Activated B cell treated with CpG ODN at 0.5 μM for 24 hours (primary cell): ENCODE measurements at regions of chr7 and their contacts with region 1.

Region 1: DNA sequence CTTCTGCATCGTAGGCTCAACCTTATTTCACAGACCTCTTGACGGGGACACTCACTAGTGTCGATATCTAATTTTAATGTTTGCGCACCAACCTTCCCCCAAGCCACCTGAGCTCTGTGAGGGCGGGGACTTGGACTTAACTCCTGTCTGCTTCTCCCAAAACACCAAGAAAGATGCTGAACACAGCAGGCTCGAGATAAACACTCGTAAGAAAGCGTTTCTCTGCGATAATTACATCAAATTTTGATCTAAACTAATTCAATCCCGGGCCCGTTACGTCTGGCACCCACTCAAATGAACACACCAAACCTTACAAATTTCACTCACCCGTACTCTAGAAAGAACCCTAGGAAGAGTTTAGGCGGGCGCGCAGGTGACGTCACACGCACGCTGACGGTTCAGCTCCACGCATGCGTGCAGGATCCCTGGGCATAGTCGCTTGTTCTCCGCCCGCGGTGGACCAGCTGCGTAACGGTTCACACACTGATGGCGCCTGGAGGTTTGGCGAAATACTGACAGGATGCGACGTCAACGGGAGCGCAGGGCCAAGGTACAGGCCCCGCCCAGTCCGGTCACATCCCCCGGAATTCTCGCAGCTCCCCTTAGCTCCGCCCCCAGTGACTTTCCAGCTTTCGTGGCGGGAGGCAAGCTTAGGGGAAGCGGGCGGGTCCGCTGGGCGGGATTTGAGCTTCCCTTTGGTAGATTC is at the start of gene POT1:
- DNase-seq: peak; percentile 89
- ATAC-seq: peak; percentile 98
- H3K4me3 Mint-ChIP-seq: peak within 1 kb of the TSS; percentile 97
- H3K27ac Mint-ChIP-seq: peak within 1 kb of the TSS; percentile 89
- H3K4me1 Mint-ChIP-seq: peaks cover 26% of the 10 kb centered on the region
- H3K27me3 Mint-ChIP-seq: no peaks in the 10 kb centered on the region
- CTCF ChIP-seq: no peak
- total RNA-seq, gene POT1: 23.4 and 26.8 TPM in 2 replicates

Region 2: GRCh38 chr7:123557398-123558288 is 1372.0 kb before region 1 on chr7 and contains the start of gene NDUFA5:
- CTCF ChIA-PET with region 1: no interaction called
- POLR2A ChIA-PET with region 1: interaction called, 8 read pairs
- intact Hi-C with region 1: loop called (anchors 2 kb)
- DNase-seq: peak; percentile 80
- ATAC-seq: peak; percentile 97
- H3K4me3 Mint-ChIP-seq: no peak within 1 kb of the TSS
- H3K27ac Mint-ChIP-seq: no peak within 1 kb of the TSS
- H3K4me1 Mint-ChIP-seq: peaks cover 10% of the 10 kb centered on the region
- H3K27me3 Mint-ChIP-seq: peaks cover 10% of the 10 kb centered on the region
- CTCF ChIP-seq: no peak
- total RNA-seq, gene NDUFA5: 54.3 and 63.8 TPM in 2 replicates

Region 3: GRCh38 chr7:123748734-123749536 is 1180.7 kb before region 1 on chr7 and contains the start of gene WASL:
- CTCF ChIA-PET with region 1: no interaction called
- POLR2A ChIA-PET with region 1: interaction called, 3 read pairs
- intact Hi-C with region 1: loop called (anchors 1 kb)
- DNase-seq: peak; percentile 89
- ATAC-seq: peak; percentile 85
- H3K4me3 Mint-ChIP-seq: peak within 1 kb of the TSS; percentile 93
- H3K27ac Mint-ChIP-seq: peak within 1 kb of the TSS; percentile 93
- H3K4me1 Mint-ChIP-seq: peaks cover 54% of the 10 kb centered on the region
- H3K27me3 Mint-ChIP-seq: no peaks in the 10 kb centered on the region
- CTCF ChIP-seq: no peak
- total RNA-seq, gene WASL: 5.5 and 6.9 TPM in 2 replicates

Region 4: DNA sequence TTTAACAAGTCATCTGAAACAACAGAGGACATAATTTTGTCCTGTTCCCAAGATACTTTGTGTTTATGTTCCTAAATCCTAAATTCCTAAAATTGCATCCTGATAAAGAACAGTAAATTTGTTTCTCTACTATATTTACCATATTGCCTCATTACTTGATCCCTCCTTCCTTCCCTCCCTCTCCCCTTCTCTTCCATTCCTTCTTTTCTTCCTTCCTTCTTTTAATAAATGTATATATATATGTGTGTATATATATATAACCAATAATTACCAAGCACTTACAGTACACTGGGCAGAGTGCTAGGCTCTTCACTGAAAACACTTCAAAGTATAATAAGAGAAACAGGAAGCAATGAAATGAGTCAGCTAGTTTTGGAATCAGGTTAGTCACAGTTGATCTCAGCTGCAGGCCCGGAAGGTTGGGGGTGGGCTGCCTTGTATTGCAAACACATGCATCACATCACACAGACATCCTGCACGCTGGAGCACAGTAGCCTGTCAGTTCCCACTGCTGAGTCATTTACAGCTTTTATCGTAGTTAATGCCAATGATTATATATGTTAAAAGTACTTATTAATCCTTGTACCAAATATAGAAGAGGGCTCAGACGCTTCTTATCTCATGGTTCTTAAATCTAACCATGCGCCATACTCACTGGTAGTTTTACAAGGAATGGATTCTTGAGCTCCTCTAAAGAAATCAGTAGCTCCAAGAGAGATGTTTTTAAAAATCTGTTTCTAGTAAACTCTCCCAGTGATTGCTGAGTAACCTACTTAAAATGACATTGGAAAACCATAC is 1771.4 kb after region 1 on chr7:
- CTCF ChIA-PET with region 1: no interaction called
- POLR2A ChIA-PET with region 1: no interaction called
- intact Hi-C with region 1: loop called (anchors 5 kb)
- DNase-seq: peak; percentile 23
- ATAC-seq: peak; percentile 95
- H3K4me3 Mint-ChIP-seq: no peak overlapping the region
- H3K27ac Mint-ChIP-seq: no peak overlapping the region
- H3K4me1 Mint-ChIP-seq: peaks cover 26% of the 10 kb centered on the region
- H3K27me3 Mint-ChIP-seq: no peaks in the 10 kb centered on the region
- CTCF ChIP-seq: no peak